Activated naive CD8-positive, alpha-beta T cell treated with anti-CD3 and anti-CD28 coated beads, Interleukin-2, amount 10 ng/mL, durations not matched to agents 7 days and 5 days (primary cell): ENCODE measurements at regions of chr12 and their contacts with region 1.

Region 1: DNA sequence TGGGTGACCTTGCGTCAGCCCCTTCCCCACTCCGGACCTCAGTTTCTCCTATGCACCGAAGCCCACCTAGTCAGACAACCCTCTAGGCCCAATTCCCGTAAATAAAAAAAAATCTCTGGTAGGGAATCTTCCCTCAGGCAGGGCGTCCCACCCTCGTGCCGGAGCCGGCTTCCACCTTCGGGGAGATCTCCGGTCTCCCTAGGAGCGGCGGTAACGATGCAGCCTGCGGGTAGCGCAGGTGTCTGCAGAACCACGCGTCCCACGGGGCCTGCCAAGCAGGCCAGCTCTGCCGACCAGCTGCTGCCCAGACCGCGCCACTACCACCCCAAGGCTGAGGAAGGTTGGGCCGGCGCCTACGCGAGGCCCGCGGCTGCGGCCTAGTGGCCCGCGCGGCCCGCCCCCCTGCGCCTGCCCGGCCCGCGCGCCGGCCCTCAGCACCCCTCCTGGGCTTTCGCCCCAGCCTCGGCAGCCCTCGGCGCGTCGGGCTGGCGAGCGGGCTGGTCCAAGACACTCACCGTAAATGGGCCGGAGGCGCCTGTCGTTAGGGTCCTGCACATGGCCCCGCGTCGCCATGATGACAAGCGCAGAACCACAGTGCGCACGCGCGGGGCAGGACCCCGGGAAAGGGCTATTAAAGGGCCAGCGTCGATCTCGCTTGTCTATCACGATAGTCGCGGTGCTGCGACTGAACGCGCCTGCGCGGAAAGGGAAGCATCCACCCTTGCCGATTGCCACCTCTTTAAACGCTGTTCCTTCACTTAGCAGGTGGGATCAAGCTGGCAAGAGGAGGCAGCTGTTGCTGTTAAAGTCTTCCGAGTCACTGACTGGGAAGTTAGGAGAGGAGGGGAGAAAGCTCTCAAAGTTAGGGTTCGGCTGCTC is at the start of gene NAA25:
- DNase-seq: peak; percentile 94
- ATAC-seq: peak; percentile 86
- H3K4me3 Mint-ChIP-seq: peak within 1 kb of the TSS; percentile 93
- H3K27ac Mint-ChIP-seq: peak within 1 kb of the TSS; percentile 98
- H3K4me1 Mint-ChIP-seq: peaks cover 36% of the 10 kb centered on the region
- H3K27me3 Mint-ChIP-seq: no peaks in the 10 kb centered on the region
- total RNA-seq, gene NAA25: 26.0 to 28.5 TPM

Region 2: DNA sequence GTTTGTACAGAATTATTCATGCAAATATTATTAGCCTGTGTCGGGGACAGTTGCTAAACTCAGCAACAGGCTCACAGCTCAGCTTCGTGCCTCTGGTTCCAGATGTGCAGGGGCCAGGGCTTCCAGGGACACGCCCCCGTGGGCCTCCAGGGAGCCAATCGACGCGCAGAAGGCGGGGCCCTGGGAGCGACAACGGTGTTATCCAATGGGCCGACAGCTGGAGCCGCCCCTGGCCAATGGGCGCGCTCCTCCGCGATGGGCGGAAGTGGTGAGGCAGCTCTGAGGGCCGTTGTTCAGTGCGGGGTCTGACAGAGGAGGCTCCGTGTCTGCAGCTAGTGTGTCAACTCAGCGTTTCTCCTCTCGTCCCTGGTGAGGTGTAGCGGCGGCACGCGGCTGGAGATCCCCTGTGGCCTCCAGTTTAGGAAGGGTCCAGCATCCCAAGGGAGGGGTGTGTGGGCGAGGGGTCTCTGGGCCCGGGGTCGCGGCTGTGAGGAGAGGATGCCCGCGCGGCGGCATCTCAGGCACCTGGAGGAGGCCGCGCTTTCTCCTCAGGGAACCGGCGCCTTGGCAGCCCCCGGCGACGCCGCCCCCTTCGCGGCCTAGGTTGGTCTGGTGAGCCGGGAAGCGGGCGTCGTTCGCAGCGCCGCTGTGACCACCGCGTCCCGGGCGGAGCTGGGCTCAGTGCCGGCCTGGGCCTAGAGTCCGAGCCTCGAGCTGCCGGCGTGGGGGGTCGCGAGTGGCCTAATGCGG is 17.0 kb after region 1 on chr12 and contains the start of gene TRAFD1:
- POLR2A ChIA-PET with region 1: interaction called, 146 read pairs
- DNase-seq: peak; percentile 99
- ATAC-seq: peak; percentile 99
- H3K4me3 Mint-ChIP-seq: peak within 1 kb of the TSS; percentile 87
- H3K27ac Mint-ChIP-seq: peak within 1 kb of the TSS; percentile 84
- H3K4me1 Mint-ChIP-seq: peaks cover 36% of the 10 kb centered on the region
- H3K27me3 Mint-ChIP-seq: peaks cover 4% of the 10 kb centered on the region
- total RNA-seq, gene TRAFD1: 69.7 to 70.3 TPM